BJ (cell line): ENCODE measurements at regions of chr16 and their contacts with region 1.

Region 1: GRCh38 chr16:20774703-20775362 is 11.0 kb downstream of the ACSM3 start:
- DNase-seq: no peak
- H3K4me3 ChIP-seq: no peak overlapping the region
- H3K27me3 ChIP-seq: no peaks in the 10 kb centered on the region
- CTCF ChIP-seq: peak; percentile 91

Region 2: GRCh38 chr16:20763461-20764232 is 11.2 kb before region 1 on chr16 and contains the start of gene ACSM3:
- CTCF ChIA-PET with region 1: interaction called, 12 read pairs
- POLR2A ChIA-PET with region 1: no interaction called
- DNase-seq: peak; percentile 47
- H3K4me3 ChIP-seq: peak within 1 kb of the TSS; percentile 45
- H3K27me3 ChIP-seq: no peaks in the 10 kb centered on the region; the same call in 1 of the 2 replicates
- CTCF ChIP-seq: no peak
- polyA plus RNA-seq, gene ACSM3: 0.29 and 0.55 TPM in 2 replicates

Region 3: GRCh38 chr16:20791923-20792612 is 17.2 kb after region 1 on chr16:
- CTCF ChIA-PET with region 1: interaction called, 41 read pairs
- POLR2A ChIA-PET with region 1: no interaction called
- DNase-seq: no peak
- H3K4me3 ChIP-seq: no peak overlapping the region
- H3K27me3 ChIP-seq: no peaks in the 10 kb centered on the region
- CTCF ChIP-seq: no peak